ENCODE measurements at regions of chr19 and their contacts with region 1.

Region 1: GRCh38 chr19:49473868-49474544 is at the start of gene FLT3LG:
- DNase-seq: peak; percentile 46
- ATAC-seq: peak; percentile 70
- H3K4me3 ChIP-seq: peak within 1 kb of the TSS; percentile 78 to 99 (median 78)
- H3K27ac ChIP-seq: no peak within 1 kb of the TSS
- H3K4me1 ChIP-seq: peaks cover 34% of the 10 kb centered on the region
- H3K27me3 ChIP-seq: no peaks in the 10 kb centered on the region; a peak in 1 of 5 replicates
- CTCF ChIP-seq: peak; percentile 95
- EP300 ChIP-seq: 0 out of 4 replicates have a peak, but pooled peaks of 1 of the 2 experiments have one; percentile 5
- POLR2A ChIP-seq: 0 out of 4 replicates have a peak, but pooled peaks of 1 of the 2 experiments have one; percentile 30
- RAD21 ChIP-seq: peak; percentile 70
- total RNA-seq, gene FLT3LG: 0.58 and 1.5 TPM in 2 replicates

Region 2: GRCh38 chr19:49451430-49452181 is 22.4 kb before region 1 on chr19 and contains the start of gene PIH1D1:
- CTCF ChIA-PET with region 1: no interaction called
- POLR2A ChIA-PET with region 1: interaction called, 33 read pairs
- in situ Hi-C with region 1: no loop called
- intact Hi-C with region 1: no loop called
- DNase-seq: peak; percentile 99
- ATAC-seq: peak; percentile 85
- H3K4me3 ChIP-seq: peak within 1 kb of the TSS; percentile 93 to 98 (median 95)
- H3K27ac ChIP-seq: peak within 1 kb of the TSS; percentile 99
- H3K4me1 ChIP-seq: peaks cover 35% of the 10 kb centered on the region
- H3K27me3 ChIP-seq: no peaks in the 10 kb centered on the region; a peak in 1 of 5 replicates
- CTCF ChIP-seq: peak; percentile 23; the same call in 1 of the 2 replicates
- EP300 ChIP-seq: no peak
- POLR2A ChIP-seq: peak; percentile 83 to 93
- RAD21 ChIP-seq: no peak
- total RNA-seq, gene PIH1D1: 94.9 and 110 TPM in 2 replicates

Region 3: GRCh38 chr19:49487277-49488045 is 13.5 kb after region 1 on chr19 and contains the start of gene RPL13A:
- CTCF ChIA-PET with region 1: no interaction called
- POLR2A ChIA-PET with region 1: interaction called, 14 read pairs
- in situ Hi-C with region 1: no loop called
- intact Hi-C with region 1: no loop called
- DNase-seq: peak; percentile 98
- ATAC-seq: peak; percentile 83
- H3K4me3 ChIP-seq: peak within 1 kb of the TSS; percentile 93 to 98 (median 97)
- H3K27ac ChIP-seq: peak within 1 kb of the TSS; percentile 87
- H3K4me1 ChIP-seq: peaks cover 29% of the 10 kb centered on the region
- H3K27me3 ChIP-seq: peaks cover 0 to 3% of the 10 kb centered on the region in 2 experiments; a peak in 1 of 5 replicates
- CTCF ChIP-seq: no peak
- EP300 ChIP-seq: no peak; a peak in 1 of 4 replicates
- POLR2A ChIP-seq: peak; percentile 95 to 99
- RAD21 ChIP-seq: no peak
- total RNA-seq, gene RPL13A: 2,601 and 3,137 TPM in 2 replicates

Measured in HepG2 (cell line).